Transverse colon (tissue), 4 donors: ENCODE measurements at regions of chr10 and their contacts with region 1.

Region 1: DNA sequence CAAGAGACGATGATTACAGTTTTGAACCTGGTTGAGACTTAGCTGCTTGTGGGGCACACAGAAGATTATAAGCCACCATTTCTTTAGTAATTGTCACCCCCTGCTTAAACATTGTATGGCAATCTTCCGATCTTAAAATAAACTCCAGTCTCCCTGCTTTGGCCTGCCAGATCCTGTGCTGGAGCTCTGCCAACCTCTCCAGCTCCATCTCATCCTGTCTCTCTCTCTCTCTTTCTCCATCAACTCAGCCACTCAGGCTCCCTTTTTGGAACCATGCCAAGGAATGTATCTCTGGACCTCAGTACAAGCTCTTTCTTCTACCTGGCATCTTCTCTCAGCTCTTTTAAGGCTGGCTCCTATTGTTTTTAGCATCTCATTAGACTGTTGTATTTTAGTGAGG is 1053.2 kb downstream of the REEP3 start:
- DNase-seq: no peak
- H3K4me3 ChIP-seq: no peak overlapping the region
- H3K27ac ChIP-seq: peak overlapping the region in 3 of 4 donors; percentile 21 to 40 (median 27)
- H3K4me1 ChIP-seq: peaks cover 0 to 16% (median 9%) of the 10 kb centered on the region in 4 donors
- H3K27me3 ChIP-seq: no peaks in the 10 kb centered on the region
- CTCF ChIP-seq: no peak
- EP300 ChIP-seq: no peak
- POLR2A ChIP-seq: no peak

Region 2: DNA sequence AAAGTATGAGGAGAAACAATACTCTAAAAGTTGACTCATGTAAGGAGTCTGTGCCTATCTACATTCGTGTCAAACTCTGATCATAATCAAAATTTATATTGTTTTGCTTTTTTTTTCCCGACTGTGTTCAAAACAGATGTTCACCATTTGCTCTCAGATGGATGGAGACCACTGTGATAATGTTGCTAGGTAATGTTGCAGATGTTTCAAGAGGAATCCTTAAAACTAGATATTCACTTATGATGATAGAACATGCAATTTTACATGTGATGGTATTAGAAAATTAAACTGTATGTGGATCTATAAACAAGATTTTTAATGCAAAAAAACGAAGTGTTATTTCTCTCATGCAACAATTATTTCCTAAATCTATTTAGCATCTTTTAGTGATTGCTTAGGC is 26.9 kb after region 1 on chr10:
- in situ Hi-C with region 1: no loop called
- intact Hi-C with region 1: loop called (anchors 1 kb)
- DNase-seq: no peak
- H3K4me3 ChIP-seq: no peak overlapping the region
- H3K27ac ChIP-seq: no peak overlapping the region
- H3K4me1 ChIP-seq: no peaks in the 10 kb centered on the region
- H3K27me3 ChIP-seq: no peaks in the 10 kb centered on the region
- CTCF ChIP-seq: no peak
- EP300 ChIP-seq: no peak
- POLR2A ChIP-seq: no peak